GM18951 (cell line): ENCODE measurements at regions of chr3 and their contacts with region 1.

Region 1: GRCh38 chr3:64030741-64031140 is 7.4 kb upstream of the PSMD6 start:
- POLR2A ChIP-seq: no peak

Region 2: GRCh38 chr3:64399205-64399800 is 368.6 kb after region 1 on chr3:
- in situ Hi-C with region 1: loop called (anchors 25 kb)
- POLR2A ChIP-seq: no peak

Region 3: GRCh38 chr3:64489361-64490044 is 458.8 kb after region 1 on chr3:
- in situ Hi-C with region 1: loop called (anchors 10 kb)
- POLR2A ChIP-seq: no peak